GM10248 (cell line): ENCODE measurements at regions of chr21 and their contacts with region 1.

Region 1: DNA sequence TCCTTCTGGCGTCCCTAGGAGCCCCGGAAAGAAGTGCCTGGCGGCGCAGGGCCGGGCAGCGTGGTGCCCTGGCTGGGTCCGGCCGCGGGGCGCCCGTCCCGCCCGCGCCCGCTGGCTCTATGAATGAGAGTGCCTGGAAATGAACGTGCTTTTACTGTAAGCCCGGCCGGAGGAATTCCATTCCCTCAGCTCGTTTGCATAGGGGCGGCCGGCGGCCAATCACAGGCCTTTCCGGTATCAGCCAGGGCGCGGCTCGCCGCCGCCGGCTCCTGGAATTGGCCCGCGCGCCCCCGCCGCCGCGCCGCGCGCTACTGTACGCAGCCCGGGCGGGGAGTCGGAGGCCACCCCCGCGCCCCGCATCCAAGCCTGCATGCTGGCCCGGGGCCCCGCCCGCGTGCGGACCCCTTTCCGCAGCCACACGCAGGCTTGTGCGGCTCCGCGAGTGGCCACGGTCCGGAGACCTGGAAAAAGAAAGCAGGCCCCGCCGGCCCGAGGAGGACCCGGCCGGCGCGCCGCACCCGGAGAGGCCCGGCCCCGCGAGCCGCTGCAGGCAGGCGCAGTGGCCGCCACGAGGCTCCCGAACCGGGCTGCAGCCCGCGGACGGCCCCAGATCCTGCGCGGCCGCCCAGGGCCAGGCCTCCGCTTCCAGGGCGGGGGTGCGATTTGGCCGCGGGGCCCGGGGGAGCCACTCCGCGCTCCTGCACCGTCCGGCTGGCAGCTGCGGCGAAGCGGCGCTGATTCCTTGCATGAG is 160.4 kb downstream of the RUNX1 start:
- DNase-seq: peak; percentile 84
- CTCF ChIP-seq: no peak

Region 2: GRCh38 chr21:34900376-34900775 is 11.6 kb after region 1 on chr21:
- CTCF ChIA-PET with region 1: interaction called, 29 read pairs
- POLR2A ChIA-PET with region 1: no interaction called
- DNase-seq: no peak
- CTCF ChIP-seq: no peak

Region 3: DNA sequence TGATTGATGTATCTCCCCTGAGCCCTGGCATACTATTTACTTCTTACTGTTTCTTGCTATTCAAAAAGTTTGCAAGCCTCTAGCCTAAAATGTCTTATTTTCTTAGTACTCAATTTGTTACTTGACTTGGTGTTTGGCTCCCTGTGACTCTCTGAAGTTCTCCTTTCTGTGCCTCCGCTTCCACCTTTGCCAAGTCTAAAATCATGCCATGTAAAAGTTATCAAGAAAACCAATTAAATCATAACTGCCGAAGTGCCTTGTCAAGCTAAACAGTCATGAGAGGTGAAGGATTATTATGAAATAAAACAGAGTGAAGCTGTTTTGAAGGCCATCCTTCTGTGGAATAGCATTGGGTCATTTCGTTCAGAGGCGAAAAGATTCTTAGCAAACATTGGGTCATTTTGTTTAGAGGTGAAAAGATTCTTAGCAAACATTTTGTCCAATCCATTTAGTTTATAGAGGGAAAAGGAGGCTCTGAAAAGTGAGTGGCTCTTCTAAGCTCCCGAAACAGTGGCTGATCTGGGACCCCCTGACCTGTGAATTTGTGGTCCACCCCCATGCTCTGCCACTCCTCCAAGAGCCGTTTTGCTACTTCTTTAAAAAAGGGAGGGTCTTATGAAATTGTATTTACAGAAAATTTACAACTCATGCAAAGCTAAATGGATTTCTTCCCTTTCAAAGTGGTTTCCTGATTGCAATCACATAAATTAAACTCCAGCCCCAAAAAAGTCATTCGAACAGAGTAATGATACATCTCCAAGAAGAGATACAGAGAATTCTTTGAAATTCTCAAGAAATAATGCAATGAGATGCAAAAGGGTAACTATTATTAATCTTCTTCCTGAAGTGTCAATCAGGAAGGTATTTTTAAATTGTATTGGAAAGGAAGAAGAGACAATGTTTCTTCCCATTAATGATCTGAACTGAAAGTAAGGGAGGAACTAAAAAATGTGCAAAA is 19.0 kb after region 1 on chr21:
- CTCF ChIA-PET with region 1: interaction called, 10 read pairs
- POLR2A ChIA-PET with region 1: no interaction called
- DNase-seq: no peak
- CTCF ChIP-seq: no peak

Region 4: GRCh38 chr21:35400233-35400957 is 511.7 kb after region 1 on chr21:
- CTCF ChIA-PET with region 1: interaction called, 15 read pairs
- POLR2A ChIA-PET with region 1: no interaction called
- DNase-seq: peak; percentile 65
- CTCF ChIP-seq: peak; percentile 60